Activated T-helper 1 cell treated with anti-CD3 and anti-CD28 coated beads, Interleukin-12 subunit alpha, Interleukin-12 subunit beta, Interleukin-2, Interleukin-4 antibody, amounts not matched to agents 30 ng/mL and 10 ng/mL and 1 ng/mL, durations not matched to agents 14 hours and 24 hours and 36 hours (primary cell): ENCODE measurements at regions of chr3 and their contacts with region 1.

Region 1: GRCh38 chr3:49939858-49940666 is at the start of gene RBM6:
- DNase-seq: peak; percentile 95
- H3K4me3 Mint-ChIP-seq: peak within 1 kb of the TSS; percentile 97
- H3K27ac Mint-ChIP-seq: peak within 1 kb of the TSS; percentile 98
- H3K4me1 Mint-ChIP-seq: peaks cover 22% of the 10 kb centered on the region
- H3K27me3 Mint-ChIP-seq: no peaks in the 10 kb centered on the region
- total RNA-seq, gene RBM6: 99.0 and 100 TPM in 2 replicates

Region 2: GRCh38 chr3:48465531-48466378 is 1474.3 kb before region 1 on chr3:
- intact Hi-C with region 1: loop called (anchors 5 kb)
- DNase-seq: peak; percentile 82
- H3K4me3 Mint-ChIP-seq: peak overlapping the region; percentile 93
- H3K27ac Mint-ChIP-seq: peak overlapping the region; percentile 98
- H3K4me1 Mint-ChIP-seq: peaks cover 44% of the 10 kb centered on the region
- H3K27me3 Mint-ChIP-seq: no peaks in the 10 kb centered on the region

Region 3: DNA sequence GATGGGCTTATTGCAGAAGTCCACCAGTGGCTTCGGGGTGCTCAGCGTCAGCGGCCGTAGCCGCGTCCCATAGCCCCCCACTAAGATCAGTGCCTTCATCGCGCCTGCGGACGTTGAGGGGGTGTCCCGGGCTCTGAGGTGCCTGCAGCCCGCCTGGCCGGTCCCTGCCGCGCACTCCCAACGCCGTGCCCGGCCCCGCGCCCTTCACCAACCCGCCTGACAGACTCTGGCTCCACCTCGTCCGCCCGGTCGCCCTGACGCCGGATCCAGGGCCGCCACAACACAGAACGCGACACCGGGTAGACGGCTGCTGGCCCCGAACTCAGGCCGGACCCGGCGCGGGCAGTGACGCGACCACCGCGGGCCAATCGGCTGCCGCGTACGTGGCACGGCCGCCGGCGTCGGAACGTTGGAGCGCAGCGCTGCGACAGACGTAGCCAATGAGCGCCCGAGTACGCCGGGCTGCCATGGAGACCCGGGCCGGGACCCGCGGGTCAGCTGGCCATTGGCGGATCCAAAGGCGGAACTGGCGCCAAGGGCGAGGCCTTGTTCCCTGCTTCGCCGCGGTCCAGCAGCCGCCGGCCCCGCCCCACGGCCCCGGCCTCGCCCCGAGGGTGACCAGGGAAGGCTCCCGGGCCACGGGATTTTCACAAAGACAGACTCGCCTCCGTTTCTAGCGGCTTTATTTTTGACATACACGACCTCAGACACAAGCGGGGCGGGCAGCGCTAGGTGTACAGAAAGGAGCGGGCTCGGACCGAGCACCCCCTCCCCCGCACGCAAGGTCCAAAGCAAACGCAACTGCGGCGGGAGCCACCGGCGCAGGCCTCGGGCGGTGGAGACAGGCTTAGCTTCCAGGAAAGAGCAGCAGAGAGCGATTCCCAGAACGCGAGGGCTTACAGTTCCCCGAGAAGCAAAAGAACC is 216.2 kb before region 1 on chr3 and contains the start of gene GMPPB:
- intact Hi-C with region 1: loop called (anchors 1 kb)
- DNase-seq: peak; percentile 95
- H3K4me3 Mint-ChIP-seq: peak within 1 kb of the TSS; percentile 95
- H3K27ac Mint-ChIP-seq: peak within 1 kb of the TSS; percentile 95
- H3K4me1 Mint-ChIP-seq: peaks cover 34% of the 10 kb centered on the region
- H3K27me3 Mint-ChIP-seq: no peaks in the 10 kb centered on the region
- total RNA-seq, gene GMPPB: 49.1 and 49.2 TPM in 2 replicates

Region 4: DNA sequence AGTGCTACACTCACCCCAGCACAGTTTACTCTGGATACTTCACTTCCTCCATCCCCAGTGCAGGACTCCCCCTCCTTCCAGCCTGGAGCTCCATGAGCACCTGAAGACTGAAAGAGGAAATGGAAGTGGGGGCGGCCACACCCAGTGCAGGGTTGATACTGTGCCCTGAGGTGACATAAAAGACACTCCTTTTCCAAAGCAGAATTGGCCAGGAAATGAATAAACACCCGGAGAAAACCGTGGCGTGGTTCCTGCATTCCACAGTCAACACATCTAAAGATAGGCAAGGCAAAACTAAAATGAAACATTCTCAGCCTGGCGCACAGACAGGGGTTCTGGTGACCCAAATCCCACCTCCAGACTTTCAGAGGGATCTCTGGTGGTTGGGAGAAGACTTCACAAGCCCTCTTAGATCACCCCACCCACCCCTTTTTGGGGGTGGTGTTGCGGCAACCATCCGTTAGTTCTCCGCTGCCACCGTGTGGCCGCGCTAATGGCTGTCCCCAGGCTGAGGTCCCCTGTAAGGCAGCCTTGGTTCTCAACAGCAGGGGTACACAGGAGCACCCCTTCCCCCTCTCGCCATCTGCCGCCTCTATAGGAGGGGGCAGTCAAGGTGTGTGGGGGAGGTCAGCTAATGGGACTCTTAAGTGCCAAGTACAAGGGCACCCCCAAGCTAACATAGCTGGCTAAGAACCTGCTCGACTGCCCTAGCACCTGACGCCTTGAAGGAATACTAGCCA is 33.9 kb before region 1 on chr3:
- intact Hi-C with region 1: loop called (anchors 1 kb)
- DNase-seq: peak; percentile 29
- H3K4me3 Mint-ChIP-seq: peak overlapping the region; percentile 16
- H3K27ac Mint-ChIP-seq: peak overlapping the region; percentile 57
- H3K4me1 Mint-ChIP-seq: peaks cover 32% of the 10 kb centered on the region
- H3K27me3 Mint-ChIP-seq: no peaks in the 10 kb centered on the region

Region 5: DNA sequence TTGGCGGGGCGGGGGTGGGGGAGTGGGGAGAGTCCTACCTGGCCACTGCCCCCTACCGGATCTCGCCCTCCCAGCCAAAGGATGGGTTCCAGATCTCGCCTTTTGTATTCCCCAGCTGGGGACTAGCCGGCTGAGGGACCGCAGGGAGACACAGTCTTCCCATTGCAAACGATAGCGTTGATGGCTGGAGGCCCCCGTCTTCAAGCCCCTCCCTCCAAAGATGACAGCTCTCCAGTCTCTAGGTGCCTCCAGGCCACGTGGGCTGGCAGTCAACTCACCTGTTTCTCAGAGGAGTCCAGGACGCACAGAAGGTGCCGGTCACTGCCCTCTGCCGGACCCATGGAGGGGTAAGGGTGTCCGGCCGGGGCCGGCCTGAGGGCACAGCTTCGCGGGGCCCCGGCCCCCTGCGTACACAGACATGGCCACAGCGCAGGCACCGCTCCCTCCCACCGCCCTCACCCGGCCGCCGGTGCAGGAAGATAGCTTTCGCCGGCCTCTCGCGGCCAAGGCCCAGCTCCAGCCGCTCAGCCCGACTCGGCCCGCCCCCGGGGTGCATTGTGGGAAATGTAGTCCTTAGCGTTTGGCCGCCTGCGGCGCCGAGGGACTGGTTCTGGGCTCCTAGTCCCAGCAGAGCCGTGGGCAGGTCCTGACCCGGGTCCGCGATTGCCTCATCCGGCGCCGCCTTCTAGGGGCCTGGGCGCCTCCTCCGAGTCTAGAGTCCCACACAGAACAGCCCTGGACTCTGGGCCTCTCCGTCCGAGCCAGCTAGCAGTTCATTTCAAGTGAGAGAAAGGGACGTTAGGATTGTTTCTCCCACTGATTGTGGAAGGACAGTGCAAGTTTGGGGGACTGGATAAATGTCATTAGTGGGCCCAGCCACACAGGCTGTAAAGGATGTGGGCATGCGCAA is 10.5 kb before region 1 on chr3 and contains the start of gene MON1A:
- intact Hi-C with region 1: loop called (anchors 1 kb)
- DNase-seq: peak; percentile 88
- H3K4me3 Mint-ChIP-seq: peak within 1 kb of the TSS; percentile 90
- H3K27ac Mint-ChIP-seq: peak within 1 kb of the TSS; percentile 81
- H3K4me1 Mint-ChIP-seq: peaks cover 21% of the 10 kb centered on the region
- H3K27me3 Mint-ChIP-seq: no peaks in the 10 kb centered on the region
- total RNA-seq, gene MON1A: 15.5 and 17.3 TPM in 2 replicates

Region 6: GRCh38 chr3:50088725-50089608 is 148.9 kb after region 1 on chr3 and contains the start of gene RBM5:
- intact Hi-C with region 1: loop called (anchors 5 kb)
- DNase-seq: peak; percentile 91
- H3K4me3 Mint-ChIP-seq: peak within 1 kb of the TSS; percentile 97
- H3K27ac Mint-ChIP-seq: peak within 1 kb of the TSS; percentile 95
- H3K4me1 Mint-ChIP-seq: peaks cover 31% of the 10 kb centered on the region
- H3K27me3 Mint-ChIP-seq: no peaks in the 10 kb centered on the region
- total RNA-seq, gene RBM5: 157 and 162 TPM in 2 replicates

Region 7: GRCh38 chr3:50235716-50236496 is 295.8 kb after region 1 on chr3 and contains the start of gene GNAI2:
- intact Hi-C with region 1: loop called (anchors 2 kb)
- DNase-seq: peak; percentile 99
- H3K4me3 Mint-ChIP-seq: peak within 1 kb of the TSS; percentile 99
- H3K27ac Mint-ChIP-seq: peak within 1 kb of the TSS; percentile 94
- H3K4me1 Mint-ChIP-seq: peaks cover 32% of the 10 kb centered on the region
- H3K27me3 Mint-ChIP-seq: no peaks in the 10 kb centered on the region
- total RNA-seq, gene GNAI2: 237 and 238 TPM in 2 replicates

Region 8: GRCh38 chr3:50418850-50419249 is 478.8 kb after region 1 on chr3:
- intact Hi-C with region 1: no loop called
- DNase-seq: no peak
- H3K4me3 Mint-ChIP-seq: no peak overlapping the region
- H3K27ac Mint-ChIP-seq: no peak overlapping the region
- H3K4me1 Mint-ChIP-seq: no peaks in the 10 kb centered on the region
- H3K27me3 Mint-ChIP-seq: no peaks in the 10 kb centered on the region